Heart right ventricle (tissue), 16 donors: ENCODE measurements at regions of chr2 and their contacts with region 1.

Region 1: DNA sequence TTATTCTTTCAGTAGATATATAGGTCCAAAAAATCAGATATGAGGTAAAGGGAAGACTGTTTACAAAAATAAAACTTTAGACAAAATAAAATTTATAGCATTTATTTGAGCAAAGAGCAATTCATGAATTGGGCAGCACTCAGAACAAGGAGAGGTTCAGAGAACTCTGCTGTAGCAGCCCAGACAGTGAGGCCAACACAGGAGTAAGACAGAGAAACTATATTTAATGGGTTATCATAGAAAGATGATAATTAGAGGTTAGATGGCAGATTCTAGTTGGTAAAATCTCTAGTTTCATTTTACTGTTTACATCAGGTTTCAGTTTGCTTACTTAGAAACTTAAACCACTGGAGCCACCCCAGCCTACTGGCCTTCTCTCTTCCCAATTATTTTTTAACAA is 30.1 kb upstream of the SP140L start:
- DNase-seq: no peak
- ATAC-seq: no peak
- H3K4me3 ChIP-seq: no peak overlapping the region
- H3K27ac ChIP-seq: no peak overlapping the region
- H3K4me1 ChIP-seq: no peaks in the 10 kb centered on the region
- H3K27me3 ChIP-seq: no peaks in the 10 kb centered on the region
- CTCF ChIP-seq: no peak

Region 2: GRCh38 chr2:230124757-230125431 is 172.0 kb before region 1 on chr2:
- intact Hi-C with region 1: no loop called
- DNase-seq: peak in 1 of 2 donors; percentile 17
- ATAC-seq: peak in 3 of 8 donors; percentile 44 to 52 (median 52)
- H3K4me3 ChIP-seq: peak overlapping the region in 1 of 10 donors; percentile 30
- H3K27ac ChIP-seq: peak overlapping the region in 1 of 10 donors; percentile 50
- H3K4me1 ChIP-seq: peaks cover 0 to 53% (median 10%) of the 10 kb centered on the region in 9 donors
- H3K27me3 ChIP-seq: no peaks in the 10 kb centered on the region
- CTCF ChIP-seq: no peak

Region 3: GRCh38 chr2:230219419-230220331 is 77.2 kb before region 1 on chr2 and contains the start of gene SP110:
- intact Hi-C with region 1: no loop called
- DNase-seq: peak; percentile 75 to 84
- ATAC-seq: peak; percentile 93 to 98 (median 96)
- H3K4me3 ChIP-seq: peak within 1 kb of the TSS; percentile 48 to 80 (median 66)
- H3K27ac ChIP-seq: peak within 1 kb of the TSS; percentile 35 to 90 (median 81)
- H3K4me1 ChIP-seq: peaks cover 0 to 44% (median 24%) of the 10 kb centered on the region in 9 donors
- H3K27me3 ChIP-seq: no peaks in the 10 kb centered on the region
- CTCF ChIP-seq: no peak
- total RNA-seq, gene SP110: 7.6 to 38.6 (median 10.4) TPM

Region 4: DNA sequence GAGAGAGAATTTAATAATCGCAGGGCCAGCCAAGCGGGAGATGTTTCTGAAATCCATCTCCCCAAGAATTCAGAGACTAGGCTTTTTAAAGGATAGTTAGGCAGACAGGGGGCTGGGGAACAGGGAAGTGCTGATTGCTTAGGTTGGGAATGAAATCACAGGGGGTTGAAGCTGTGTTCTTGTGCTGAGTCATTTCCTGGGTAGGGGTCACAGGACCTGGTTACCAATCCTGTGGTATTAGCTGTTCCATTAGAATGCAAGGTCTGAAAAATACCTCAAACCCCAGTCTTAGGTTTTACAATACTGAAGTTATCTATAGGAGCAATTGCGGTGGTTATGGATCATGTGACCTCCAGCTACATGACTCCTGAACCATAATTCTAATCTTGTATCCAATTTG is 66.8 kb before region 1 on chr2:
- intact Hi-C with region 1: loop called in 1 of 10 experiments (anchors 10 kb)
- DNase-seq: no peak
- ATAC-seq: no peak
- H3K4me3 ChIP-seq: no peak overlapping the region
- H3K27ac ChIP-seq: no peak overlapping the region
- H3K4me1 ChIP-seq: peaks cover 0 to 33% (median 0%) of the 10 kb centered on the region in 9 donors
- H3K27me3 ChIP-seq: no peaks in the 10 kb centered on the region
- CTCF ChIP-seq: no peak

Region 5: DNA sequence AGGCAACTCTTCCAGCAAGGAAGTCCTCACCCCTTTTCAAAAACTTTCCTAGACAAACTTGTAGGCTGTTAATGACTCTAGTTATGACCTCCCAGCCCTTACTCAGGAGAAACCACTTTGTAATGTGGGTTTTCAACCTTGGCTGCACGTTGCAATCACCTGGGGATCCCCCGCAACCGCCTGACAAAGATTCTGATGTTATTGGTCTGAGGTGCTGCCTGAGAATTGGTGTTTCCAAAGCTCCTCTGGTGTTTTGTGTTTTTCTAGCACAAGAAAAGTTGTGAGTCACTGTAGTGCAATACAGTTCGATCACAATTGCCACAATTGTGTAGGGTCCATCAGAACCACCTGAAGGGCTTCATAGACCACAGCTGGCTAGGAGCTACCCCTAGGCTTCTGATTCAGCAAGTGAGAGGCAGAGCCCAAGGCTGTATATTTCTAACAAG is 240.6 kb after region 1 on chr2:
- intact Hi-C with region 1: no loop called
- DNase-seq: no peak
- ATAC-seq: no peak
- H3K4me3 ChIP-seq: no peak overlapping the region
- H3K27ac ChIP-seq: no peak overlapping the region
- H3K4me1 ChIP-seq: no peaks in the 10 kb centered on the region
- H3K27me3 ChIP-seq: no peaks in the 10 kb centered on the region
- CTCF ChIP-seq: no peak